Stomach (tissue), 19 donors: ENCODE measurements at regions of chrX and their contacts with region 1.

Region 1: DNA sequence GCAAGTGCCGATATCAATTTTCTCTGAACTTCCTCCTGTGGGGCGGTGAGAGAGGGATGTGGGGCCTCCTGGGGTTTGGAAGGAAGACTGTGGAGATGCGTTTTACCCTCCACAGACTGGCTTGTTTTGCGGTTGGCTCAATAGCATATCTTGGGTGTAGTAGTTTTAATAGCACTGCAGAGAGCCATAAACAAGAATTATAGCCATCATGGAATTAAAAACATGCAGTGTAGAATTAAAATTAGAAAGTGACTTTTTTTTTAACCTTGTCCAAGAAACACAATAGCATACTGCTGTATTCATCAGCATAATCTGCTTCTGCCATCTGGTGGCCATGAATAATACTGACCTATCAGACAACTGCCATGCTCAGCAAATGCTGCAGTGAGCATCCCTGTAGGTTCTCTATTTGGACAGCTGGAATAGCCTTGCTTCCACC is 47.3 kb upstream of the SCML1 start:
- DNase-seq: peak; percentile 41 to 88
- H3K4me3 ChIP-seq: no peak overlapping the region
- H3K27ac ChIP-seq: no peak overlapping the region
- H3K4me1 ChIP-seq: peaks cover 0 to 4% (median 0%) of the 10 kb centered on the region in 4 donors
- H3K27me3 ChIP-seq: no peaks in the 10 kb centered on the region
- CTCF ChIP-seq: peak in 5 of 7 experiments; percentile 30 to 69 (median 51)
- EP300 ChIP-seq: no peak
- POLR2A ChIP-seq: no peak

Region 2: GRCh38 chrX:17242470-17242869 is 447.5 kb before region 1 on chrX:
- intact Hi-C with region 1: loop called (anchors 5 kb)
- DNase-seq: peak; percentile 49 to 78
- H3K4me3 ChIP-seq: no peak overlapping the region
- H3K27ac ChIP-seq: no peak overlapping the region
- H3K4me1 ChIP-seq: no peaks in the 10 kb centered on the region
- H3K27me3 ChIP-seq: no peaks in the 10 kb centered on the region
- CTCF ChIP-seq: peak in 5 of 7 experiments; percentile 50 to 81 (median 65)
- EP300 ChIP-seq: no peak
- POLR2A ChIP-seq: no peak

Region 3: DNA sequence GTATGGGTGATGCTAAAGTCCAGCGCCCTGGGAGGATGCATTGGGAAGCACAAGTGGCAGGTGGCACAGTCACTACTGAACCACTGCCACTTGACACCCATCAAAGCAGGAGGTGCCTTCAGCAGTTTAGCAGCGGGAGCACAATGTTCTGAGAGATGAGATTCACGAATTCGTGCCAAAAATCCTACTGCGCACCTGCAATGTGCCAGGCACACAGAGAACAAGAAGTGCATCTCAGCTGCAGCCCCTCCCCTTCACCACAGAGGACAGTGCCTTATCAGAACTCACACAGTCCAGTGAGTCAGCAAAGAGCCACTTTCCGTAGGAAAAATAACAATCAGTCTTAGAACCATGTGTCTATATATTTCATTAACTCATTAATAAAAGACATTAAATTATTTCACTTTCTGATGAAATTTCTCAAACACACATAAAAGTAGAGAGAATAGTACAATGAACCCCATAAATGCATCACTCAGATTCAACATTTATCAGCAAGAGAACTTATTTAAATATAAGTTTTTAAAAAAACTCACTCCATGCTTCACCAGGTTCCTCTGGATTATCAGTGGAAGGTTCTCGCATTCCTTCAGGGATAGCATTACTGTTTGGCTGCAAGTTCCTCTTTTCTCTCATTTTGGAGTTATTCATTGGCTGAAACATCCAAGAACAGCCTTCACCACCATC is 483.6 kb after region 1 on chrX:
- intact Hi-C with region 1: no loop called
- DNase-seq: no peak
- H3K4me3 ChIP-seq: no peak overlapping the region
- H3K27ac ChIP-seq: no peak overlapping the region
- H3K4me1 ChIP-seq: no peaks in the 10 kb centered on the region
- H3K27me3 ChIP-seq: peaks cover 0 to 9% (median 0%) of the 10 kb centered on the region in 3 donors
- CTCF ChIP-seq: no peak
- EP300 ChIP-seq: no peak
- POLR2A ChIP-seq: no peak

Region 4: DNA sequence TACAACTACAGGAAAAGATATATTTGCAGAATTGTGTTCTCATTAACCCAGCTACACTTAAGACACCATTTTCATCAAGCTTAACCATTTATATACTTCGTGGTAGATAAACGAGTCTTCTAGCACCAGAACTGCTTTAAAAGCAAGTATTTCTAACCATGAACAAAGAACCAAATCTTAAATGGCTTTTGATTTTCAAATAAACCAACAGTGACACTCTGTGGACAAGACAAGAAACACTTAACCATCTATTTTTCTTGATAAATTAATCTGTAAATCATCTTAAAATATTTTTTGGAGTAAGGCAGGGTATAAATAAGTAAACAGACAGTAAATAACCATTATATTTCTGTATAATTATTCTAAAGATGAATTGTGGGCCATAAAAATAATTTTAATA is 520.5 kb after region 1 on chrX:
- intact Hi-C with region 1: no loop called
- DNase-seq: peak in 1 of 2 donors; percentile 26
- H3K4me3 ChIP-seq: no peak overlapping the region
- H3K27ac ChIP-seq: no peak overlapping the region
- H3K4me1 ChIP-seq: no peaks in the 10 kb centered on the region
- H3K27me3 ChIP-seq: no peaks in the 10 kb centered on the region
- CTCF ChIP-seq: peak in 1 of 7 experiments; percentile 10
- EP300 ChIP-seq: no peak
- POLR2A ChIP-seq: no peak